HCT116 (cell line): ENCODE measurements at regions of chr16 and their contacts with region 1.

Region 1: DNA sequence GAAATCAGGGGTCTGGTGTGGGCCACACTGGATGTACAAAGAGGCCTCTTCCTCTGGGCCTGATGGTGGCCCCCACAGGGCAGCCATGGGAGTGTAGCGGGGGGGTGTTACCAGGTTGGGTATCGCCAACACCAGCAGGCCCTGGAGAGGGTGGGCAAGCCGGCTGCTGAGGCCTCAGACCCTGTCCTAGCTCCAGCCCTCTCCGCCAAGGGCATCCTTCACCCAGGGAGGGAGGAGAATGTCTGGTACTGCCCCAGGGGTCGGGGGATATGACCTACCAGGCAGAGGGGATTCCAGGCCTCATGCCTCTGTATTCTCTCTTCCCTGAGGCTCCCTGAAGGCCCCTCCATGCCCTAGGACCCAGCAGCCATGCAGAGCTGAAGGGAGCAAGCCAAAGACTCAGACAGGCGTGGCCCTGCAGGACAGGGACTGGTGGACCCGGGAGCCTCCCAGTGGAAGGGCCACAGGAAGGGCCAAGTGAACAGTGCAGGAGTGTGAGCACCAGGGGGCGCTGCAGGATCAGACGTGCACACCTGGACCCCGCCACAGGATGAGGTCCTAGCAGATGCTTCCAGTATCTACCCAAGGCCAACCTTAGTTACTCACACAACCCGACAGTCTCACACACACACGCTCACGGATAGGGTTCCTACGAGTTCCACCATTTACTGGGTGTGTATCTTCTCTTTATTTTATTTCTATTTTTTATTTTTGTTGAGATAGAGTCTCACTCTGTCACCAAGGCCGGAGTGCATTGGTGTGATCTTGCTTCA is 10.9 kb upstream of the CES4A start:
- DNase-seq: peak; percentile 60
- ATAC-seq: peak; percentile 97
- H3K4me3 ChIP-seq: no peak overlapping the region
- H3K27ac ChIP-seq: no peak overlapping the region
- H3K4me1 ChIP-seq: peaks cover 15 to 34% of the 10 kb centered on the region in 2 experiments
- H3K27me3 ChIP-seq: no peaks in the 10 kb centered on the region
- CTCF ChIP-seq: peak; percentile 92 to 97 (median 94)
- POLR2A ChIP-seq: no peak
- RAD21 ChIP-seq: peak; percentile 99

Region 2: GRCh38 chr16:67028555-67029248 is 51.2 kb after region 1 on chr16 and contains the start of gene CBFB:
- CTCF ChIA-PET with region 1: no interaction called
- POLR2A ChIA-PET with region 1: no interaction called
- RAD21 ChIA-PET with region 1: no interaction called
- intact Hi-C with region 1: no loop called
- DNase-seq: peak; percentile 85
- ATAC-seq: peak; percentile 92
- H3K4me3 ChIP-seq: peak within 1 kb of the TSS; percentile 78 to 94
- H3K27ac ChIP-seq: peak within 1 kb of the TSS; percentile 97
- H3K4me1 ChIP-seq: peaks cover 12 to 24% of the 10 kb centered on the region in 2 experiments; a peak in 3 of 4 replicates
- H3K27me3 ChIP-seq: no peaks in the 10 kb centered on the region
- CTCF ChIP-seq: peak in 2 of 3 experiments; percentile 35 to 39; a peak in 3 of 6 replicates
- POLR2A ChIP-seq: peak; percentile 93
- RAD21 ChIP-seq: no peak
- total RNA-seq, gene CBFB: 101 TPM

Region 3: GRCh38 chr16:67104061-67104460 is 126.5 kb after region 1 on chr16:
- CTCF ChIA-PET with region 1: no interaction called
- POLR2A ChIA-PET with region 1: no interaction called
- RAD21 ChIA-PET with region 1: no interaction called
- intact Hi-C with region 1: loop called (anchors 2 kb)
- DNase-seq: no peak
- ATAC-seq: peak; percentile 89
- H3K4me3 ChIP-seq: no peak overlapping the region
- H3K27ac ChIP-seq: no peak overlapping the region
- H3K4me1 ChIP-seq: peaks cover under 1 to 9% of the 10 kb centered on the region in 2 experiments; a peak in 3 of 4 replicates
- H3K27me3 ChIP-seq: no peaks in the 10 kb centered on the region
- CTCF ChIP-seq: peak in 2 of 3 experiments; percentile 69 to 72; a peak in 4 of 6 replicates
- POLR2A ChIP-seq: no peak
- RAD21 ChIP-seq: peak; percentile 44

Region 4: GRCh38 chr16:67159593-67160406 is 182.3 kb after region 1 on chr16 and contains the starts of genes FBXL8 and TRADD:
- CTCF ChIA-PET with region 1: interaction called, 7 read pairs
- POLR2A ChIA-PET with region 1: no interaction called
- RAD21 ChIA-PET with region 1: no interaction called
- intact Hi-C with region 1: loop called (anchors 1 kb)
- DNase-seq: no peak
- ATAC-seq: peak; percentile 74
- H3K4me3 ChIP-seq: peak within 1 kb of the TSS; percentile 80 to 98
- H3K27ac ChIP-seq: peak within 1 kb of the TSS; percentile 69
- H3K4me1 ChIP-seq: peaks cover 18 to 44% of the 10 kb centered on the region in 2 experiments
- H3K27me3 ChIP-seq: no peaks in the 10 kb centered on the region
- CTCF ChIP-seq: peak in 2 of 3 experiments; percentile 44 to 51; a peak in 5 of 6 replicates
- POLR2A ChIP-seq: no peak
- RAD21 ChIP-seq: no peak
- total RNA-seq, gene FBXL8: 27.8 TPM
- total RNA-seq, gene TRADD: 20.5 TPM

Region 5: GRCh38 chr16:67184995-67185650 is 207.6 kb after region 1 on chr16:
- CTCF ChIA-PET with region 1: interaction called, 5 read pairs
- POLR2A ChIA-PET with region 1: no interaction called
- RAD21 ChIA-PET with region 1: no interaction called
- intact Hi-C with region 1: loop called (anchors 1 kb)
- DNase-seq: peak; percentile 67
- ATAC-seq: peak; percentile 61
- H3K4me3 ChIP-seq: no peak overlapping the region
- H3K27ac ChIP-seq: no peak overlapping the region; the same call in 1 of the 2 replicates
- H3K4me1 ChIP-seq: peaks cover 10 to 43% of the 10 kb centered on the region in 2 experiments; a peak in 3 of 4 replicates
- H3K27me3 ChIP-seq: no peaks in the 10 kb centered on the region
- CTCF ChIP-seq: peak in 2 of 3 experiments; percentile 80; a peak in 4 of 6 replicates
- POLR2A ChIP-seq: no peak
- RAD21 ChIP-seq: no peak